Breast epithelium (tissue), 4 donors: ENCODE measurements at regions of chr6 and their contacts with region 1.

Region 1: GRCh38 chr6:166997768-166998255 is 1.4 kb upstream of the CEP43 start:
- DNase-seq: peak; percentile 53 to 78
- H3K4me3 ChIP-seq: peak overlapping the region; percentile 84 to 99 (median 86)
- H3K27ac ChIP-seq: peak overlapping the region; percentile 80 to 83
- H3K4me1 ChIP-seq: peaks cover 0 to 6% of the 10 kb centered on the region in 2 donors
- H3K27me3 ChIP-seq: no peaks in the 10 kb centered on the region
- CTCF ChIP-seq: peak in 2 of 3 donors; percentile 20 to 42
- POLR2A ChIP-seq: no peak

Region 2: DNA sequence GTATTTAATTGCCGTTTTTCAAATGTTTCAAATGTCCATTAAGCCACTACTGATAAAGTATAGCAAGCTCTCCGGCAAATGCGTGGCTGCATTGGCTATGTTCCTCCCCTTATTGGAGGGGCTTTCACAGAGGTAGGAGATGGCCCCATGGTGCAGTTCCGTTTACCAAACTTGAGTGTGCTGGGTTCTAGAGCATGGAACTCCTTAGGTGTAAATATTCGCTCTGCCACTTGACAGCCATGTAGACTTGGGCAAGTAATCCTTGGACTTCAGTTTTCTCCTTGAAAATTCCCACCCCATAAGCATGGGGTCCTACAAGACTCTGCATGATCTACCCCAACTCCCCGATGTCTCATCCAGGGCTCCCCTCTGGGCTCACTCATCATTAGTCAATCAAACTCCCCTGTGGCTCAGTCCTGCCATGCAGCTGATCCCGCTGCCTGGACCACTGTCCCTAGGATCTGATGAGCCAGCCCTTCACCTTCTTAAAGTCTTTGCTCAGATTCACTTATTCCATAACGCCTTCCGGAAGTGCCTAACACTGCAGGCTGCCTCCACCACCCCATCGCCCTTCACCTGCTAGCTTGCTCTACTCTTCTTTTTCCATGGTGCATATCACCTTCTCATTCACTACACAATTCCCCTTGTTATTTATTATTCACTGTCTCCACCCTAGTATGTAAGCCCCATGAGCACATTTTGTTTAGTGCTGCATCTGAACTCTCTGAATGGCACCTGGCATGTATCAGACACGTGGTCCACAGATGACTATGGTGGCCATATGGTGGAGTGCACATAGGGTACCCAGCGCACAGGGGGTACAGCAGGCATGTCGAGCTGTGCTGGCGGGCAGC is 708.4 kb before region 1 on chr6:
- intact Hi-C with region 1: no loop called
- DNase-seq: no peak
- H3K4me3 ChIP-seq: no peak overlapping the region
- H3K27ac ChIP-seq: no peak overlapping the region
- H3K4me1 ChIP-seq: no peaks in the 10 kb centered on the region
- H3K27me3 ChIP-seq: peaks cover 0 to 15% of the 10 kb centered on the region in 2 donors
- CTCF ChIP-seq: no peak
- POLR2A ChIP-seq: no peak

Region 3: DNA sequence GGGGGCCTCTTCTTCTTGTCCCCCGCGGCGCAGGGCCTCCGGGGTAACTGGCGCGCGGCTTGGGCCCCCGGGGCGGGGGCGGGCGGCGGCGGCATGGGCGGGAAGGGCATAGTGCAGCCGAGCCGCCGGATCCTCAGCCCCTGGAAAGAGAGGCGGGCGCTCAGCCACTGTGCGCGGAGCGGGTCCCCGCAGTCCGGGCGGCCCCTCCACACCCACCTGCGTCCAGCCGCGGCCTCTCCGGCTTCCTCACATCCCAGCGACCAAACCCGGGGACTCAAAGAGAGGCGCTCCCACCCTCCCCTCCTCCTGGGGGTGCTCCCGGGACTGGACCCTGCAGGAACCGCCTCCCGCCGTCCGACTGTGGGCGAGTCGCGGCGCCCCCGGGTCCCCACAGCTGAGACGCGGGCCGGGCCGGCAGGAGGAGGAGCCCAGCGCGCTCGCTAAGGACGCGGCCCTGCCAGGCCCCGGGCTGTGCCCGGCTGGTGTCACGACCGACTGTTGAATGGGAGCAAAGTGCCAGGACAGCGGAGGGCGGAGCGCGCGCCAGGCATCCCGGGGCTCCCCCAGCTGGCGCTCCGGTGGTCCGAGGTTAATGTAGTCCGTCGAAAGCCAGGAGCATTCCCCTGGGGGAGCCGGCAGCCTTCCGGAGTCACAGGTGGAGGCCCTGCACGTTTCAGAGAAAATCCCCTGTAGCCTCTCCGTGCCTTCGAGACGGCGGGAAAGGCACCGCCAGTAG is 689.6 kb before region 1 on chr6 and contains the start of gene PRR18:
- intact Hi-C with region 1: no loop called
- DNase-seq: no peak
- H3K4me3 ChIP-seq: peak within 1 kb of the TSS; percentile 35 to 75 (median 50)
- H3K27ac ChIP-seq: no peak within 1 kb of the TSS
- H3K4me1 ChIP-seq: peaks cover 0 to 7% of the 10 kb centered on the region in 2 donors
- H3K27me3 ChIP-seq: peaks cover 9 to 22% of the 10 kb centered on the region in 2 donors
- CTCF ChIP-seq: no peak
- POLR2A ChIP-seq: no peak
- total RNA-seq, gene PRR18: 0.29 TPM in 1 of 3 donors, not detected in the others

Region 4: GRCh38 chr6:167122041-167122826 is 124.4 kb after region 1 on chr6:
- intact Hi-C with region 1: loop called (anchors 2 kb)
- DNase-seq: no peak
- H3K4me3 ChIP-seq: no peak overlapping the region
- H3K27ac ChIP-seq: no peak overlapping the region
- H3K4me1 ChIP-seq: no peaks in the 10 kb centered on the region
- H3K27me3 ChIP-seq: no peaks in the 10 kb centered on the region
- CTCF ChIP-seq: no peak
- POLR2A ChIP-seq: no peak